H1 (cell line): ENCODE measurements at regions of chr1 and their contacts with region 1.

Region 1: GRCh38 chr1:223556414-223557129 is 108.9 kb downstream of the CAPN8 start:
- DNase-seq: peak; percentile 31 to 93
- H3K4me3 ChIP-seq: no peak overlapping the region
- H3K27ac ChIP-seq: no peak overlapping the region
- H3K4me1 ChIP-seq: no peaks in the 10 kb centered on the region
- H3K27me3 ChIP-seq: no peaks in the 10 kb centered on the region
- CTCF ChIP-seq: peak; percentile 95 to 96 (median 96)
- EP300 ChIP-seq: no peak
- POLR2A ChIP-seq: no peak
- RAD21 ChIP-seq: peak; percentile 94

Region 2: GRCh38 chr1:223531742-223532341 is 24.7 kb before region 1 on chr1:
- CTCF ChIA-PET with region 1: interaction called, 12 read pairs
- POLR2A ChIA-PET with region 1: no interaction called
- DNase-seq: peak; percentile 50 to 90
- H3K4me3 ChIP-seq: no peak overlapping the region
- H3K27ac ChIP-seq: no peak overlapping the region
- H3K4me1 ChIP-seq: peaks cover 0 to 2% (median 0%) of the 10 kb centered on the region in 4 experiments; a peak in 1 of 7 replicates
- H3K27me3 ChIP-seq: no peaks in the 10 kb centered on the region
- CTCF ChIP-seq: peak; percentile 80 to 98 (median 93)
- EP300 ChIP-seq: no peak
- POLR2A ChIP-seq: no peak
- RAD21 ChIP-seq: peak; percentile 82 to 85

Region 3: GRCh38 chr1:223611936-223612335 is 55.4 kb after region 1 on chr1:
- CTCF ChIA-PET with region 1: interaction called, 141 read pairs
- POLR2A ChIA-PET with region 1: interaction called, 7 read pairs
- DNase-seq: no peak
- H3K4me3 ChIP-seq: no peak overlapping the region
- H3K27ac ChIP-seq: no peak overlapping the region
- H3K4me1 ChIP-seq: no peaks in the 10 kb centered on the region
- H3K27me3 ChIP-seq: no peaks in the 10 kb centered on the region; a peak in 1 of 7 replicates
- CTCF ChIP-seq: no peak
- EP300 ChIP-seq: no peak
- POLR2A ChIP-seq: no peak
- RAD21 ChIP-seq: no peak

Region 4: GRCh38 chr1:223628233-223629125 is 71.9 kb after region 1 on chr1:
- CTCF ChIA-PET with region 1: interaction called, 18 read pairs
- POLR2A ChIA-PET with region 1: interaction called, 3 read pairs
- DNase-seq: peak; percentile 10 to 76
- H3K4me3 ChIP-seq: no peak overlapping the region
- H3K27ac ChIP-seq: no peak overlapping the region
- H3K4me1 ChIP-seq: 0 out of 7 replicates have a peak, but pooled peaks cover 0 to 4% (median 0%) of the 10 kb centered on the region in 4 experiments
- H3K27me3 ChIP-seq: no peaks in the 10 kb centered on the region
- CTCF ChIP-seq: peak; percentile 71 to 91 (median 87)
- EP300 ChIP-seq: no peak
- POLR2A ChIP-seq: no peak
- RAD21 ChIP-seq: peak; percentile 51 to 62

Region 5: DNA sequence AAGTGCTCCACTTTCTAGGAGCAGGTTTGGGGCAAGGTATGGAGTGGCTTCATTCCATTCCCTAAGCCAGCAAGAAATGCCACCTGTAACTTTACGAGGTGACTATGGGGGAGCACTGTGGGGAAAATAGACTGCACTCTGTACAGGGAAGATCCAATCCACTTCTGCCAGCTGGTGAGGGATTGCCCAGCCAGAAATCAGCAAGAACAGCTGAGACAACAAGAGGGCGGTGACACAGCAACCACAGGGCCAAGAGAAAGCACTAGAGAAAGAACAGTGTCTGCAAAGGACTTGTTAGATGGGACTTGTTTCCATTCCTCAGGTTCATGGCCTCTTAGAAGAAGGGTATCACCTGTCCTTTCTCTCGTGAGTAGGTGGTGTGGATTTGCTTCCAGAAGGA is 89.3 kb after region 1 on chr1:
- CTCF ChIA-PET with region 1: interaction called, 19 read pairs
- POLR2A ChIA-PET with region 1: interaction called, 3 read pairs
- DNase-seq: no peak
- H3K4me3 ChIP-seq: no peak overlapping the region
- H3K27ac ChIP-seq: no peak overlapping the region
- H3K4me1 ChIP-seq: peaks cover 8 to 18% (median 10%) of the 10 kb centered on the region in 4 experiments; a peak in 6 of 7 replicates
- H3K27me3 ChIP-seq: no peaks in the 10 kb centered on the region
- CTCF ChIP-seq: no peak
- EP300 ChIP-seq: no peak
- POLR2A ChIP-seq: no peak
- RAD21 ChIP-seq: no peak

Region 6: GRCh38 chr1:223670458-223671168 is 114.0 kb after region 1 on chr1:
- CTCF ChIA-PET with region 1: interaction called, 34 read pairs
- POLR2A ChIA-PET with region 1: no interaction called
- DNase-seq: peak; percentile 53 to 64
- H3K4me3 ChIP-seq: no peak overlapping the region
- H3K27ac ChIP-seq: no peak overlapping the region
- H3K4me1 ChIP-seq: no peaks in the 10 kb centered on the region; a peak in 2 of 7 replicates
- H3K27me3 ChIP-seq: no peaks in the 10 kb centered on the region
- CTCF ChIP-seq: peak; percentile 73 to 92 (median 88)
- EP300 ChIP-seq: no peak
- POLR2A ChIP-seq: no peak
- RAD21 ChIP-seq: peak; percentile 85 to 90